HepG2 (cell line): ENCODE measurements at regions of chr12 and their contacts with region 1.

Region 1: DNA sequence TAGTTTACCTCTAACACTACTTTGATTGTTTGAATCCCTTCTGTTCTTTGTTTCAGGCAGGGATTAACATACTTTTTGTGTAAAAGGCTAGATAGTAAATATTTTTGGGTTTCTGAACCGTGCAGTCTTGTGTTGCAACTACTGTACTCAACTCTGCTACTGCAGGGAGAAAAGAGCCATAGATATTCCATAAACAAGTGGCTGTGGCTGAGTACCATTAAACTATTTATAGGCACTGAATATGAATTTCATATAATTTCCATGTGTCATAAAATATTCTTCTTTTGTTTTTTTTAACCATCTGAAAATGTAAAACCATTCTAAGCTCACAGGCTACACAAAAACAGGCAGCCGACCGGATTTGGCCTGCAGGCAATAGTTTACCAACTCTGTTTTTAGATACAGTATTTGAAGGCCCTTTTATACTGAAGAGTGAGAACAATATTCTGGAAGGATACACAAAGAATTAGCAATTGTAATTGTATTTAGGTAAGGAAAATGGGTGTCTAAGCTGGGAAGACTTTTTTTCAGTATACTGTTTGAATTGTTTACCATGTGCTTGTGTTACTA is 15.7 kb downstream of the NR1H4 start:
- DNase-seq: no peak
- ATAC-seq: no peak
- H3K4me3 ChIP-seq: no peak overlapping the region
- H3K27ac ChIP-seq: no peak overlapping the region
- H3K4me1 ChIP-seq: peaks cover 36% of the 10 kb centered on the region
- H3K27me3 ChIP-seq: no peaks in the 10 kb centered on the region
- CTCF ChIP-seq: no peak
- EP300 ChIP-seq: no peak
- POLR2A ChIP-seq: no peak
- RAD21 ChIP-seq: no peak

Region 2: DNA sequence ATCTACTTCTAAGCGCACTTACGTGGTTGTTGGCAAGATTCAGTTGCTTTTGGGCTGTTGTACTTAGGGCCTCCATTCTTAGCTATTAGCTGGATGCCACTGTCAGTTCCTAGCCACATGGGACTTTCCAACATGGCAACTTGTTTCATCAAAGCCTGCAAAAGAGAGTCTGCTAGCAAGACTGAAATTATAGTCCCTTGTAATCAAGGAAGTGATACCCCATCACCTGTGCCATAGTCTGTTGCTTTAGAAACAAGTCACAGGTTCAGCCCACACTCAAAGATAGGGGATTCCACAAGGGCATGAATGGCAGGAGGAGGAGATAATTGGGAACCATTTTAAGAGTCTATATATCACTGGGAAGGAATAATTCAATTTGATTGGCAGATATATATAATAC is 159.5 kb before region 1 on chr12:
- CTCF ChIA-PET with region 1: no interaction called
- POLR2A ChIA-PET with region 1: no interaction called
- in situ Hi-C with region 1: no loop called
- intact Hi-C with region 1: no loop called
- DNase-seq: no peak
- ATAC-seq: no peak
- H3K4me3 ChIP-seq: no peak overlapping the region
- H3K27ac ChIP-seq: no peak overlapping the region
- H3K4me1 ChIP-seq: no peaks in the 10 kb centered on the region
- H3K27me3 ChIP-seq: no peaks in the 10 kb centered on the region
- CTCF ChIP-seq: no peak
- EP300 ChIP-seq: no peak
- POLR2A ChIP-seq: no peak
- RAD21 ChIP-seq: no peak

Region 3: GRCh38 chr12:100404769-100405407 is 84.4 kb before region 1 on chr12:
- CTCF ChIA-PET with region 1: no interaction called
- POLR2A ChIA-PET with region 1: no interaction called
- in situ Hi-C with region 1: no loop called
- intact Hi-C with region 1: no loop called
- DNase-seq: peak; percentile 76
- ATAC-seq: peak; percentile 98
- H3K4me3 ChIP-seq: peak overlapping the region in 1 of 3 experiments; percentile 34; a peak in 2 of 6 replicates
- H3K27ac ChIP-seq: no peak overlapping the region
- H3K4me1 ChIP-seq: peaks cover 26% of the 10 kb centered on the region
- H3K27me3 ChIP-seq: no peaks in the 10 kb centered on the region
- CTCF ChIP-seq: peak; percentile 91
- EP300 ChIP-seq: no peak
- POLR2A ChIP-seq: no peak
- RAD21 ChIP-seq: peak; percentile 71

Region 4: GRCh38 chr12:100447381-100447780 is 42.0 kb before region 1 on chr12:
- CTCF ChIA-PET with region 1: no interaction called
- POLR2A ChIA-PET with region 1: no interaction called
- in situ Hi-C with region 1: no loop called
- intact Hi-C with region 1: loop called (anchors 5 kb)
- DNase-seq: no peak
- ATAC-seq: no peak
- H3K4me3 ChIP-seq: no peak overlapping the region
- H3K27ac ChIP-seq: no peak overlapping the region
- H3K4me1 ChIP-seq: peaks cover 52% of the 10 kb centered on the region
- H3K27me3 ChIP-seq: no peaks in the 10 kb centered on the region
- CTCF ChIP-seq: no peak
- EP300 ChIP-seq: no peak
- POLR2A ChIP-seq: no peak
- RAD21 ChIP-seq: no peak